ENCODE measurements at regions of chr5 and their contacts with region 1.

Region 1: DNA sequence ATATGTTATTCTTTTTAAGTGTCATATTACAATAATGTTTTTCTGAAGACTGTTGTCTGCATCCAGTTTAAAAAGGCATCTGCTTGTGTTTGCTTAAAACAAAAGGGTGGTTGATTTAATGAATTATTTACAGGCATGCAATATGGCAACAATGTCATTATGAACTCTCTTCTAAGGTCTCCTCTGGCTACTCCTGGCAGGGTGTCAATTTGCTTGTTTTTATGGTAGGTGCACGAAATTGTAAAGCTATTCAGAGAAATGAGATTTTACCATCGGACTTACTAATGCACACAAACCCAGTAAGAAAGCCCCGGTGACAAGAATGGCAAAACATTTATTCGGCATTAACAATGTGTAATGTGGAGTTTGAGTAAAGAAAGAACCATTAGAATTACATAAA is 539.8 kb upstream of the ZNF608 start:
- DNase-seq: no peak
- ATAC-seq: no peak
- H3K4me3 ChIP-seq: no peak overlapping the region
- H3K27ac ChIP-seq: no peak overlapping the region
- H3K4me1 ChIP-seq: no peaks in the 10 kb centered on the region
- H3K27me3 ChIP-seq: no peaks in the 10 kb centered on the region

Region 2: DNA sequence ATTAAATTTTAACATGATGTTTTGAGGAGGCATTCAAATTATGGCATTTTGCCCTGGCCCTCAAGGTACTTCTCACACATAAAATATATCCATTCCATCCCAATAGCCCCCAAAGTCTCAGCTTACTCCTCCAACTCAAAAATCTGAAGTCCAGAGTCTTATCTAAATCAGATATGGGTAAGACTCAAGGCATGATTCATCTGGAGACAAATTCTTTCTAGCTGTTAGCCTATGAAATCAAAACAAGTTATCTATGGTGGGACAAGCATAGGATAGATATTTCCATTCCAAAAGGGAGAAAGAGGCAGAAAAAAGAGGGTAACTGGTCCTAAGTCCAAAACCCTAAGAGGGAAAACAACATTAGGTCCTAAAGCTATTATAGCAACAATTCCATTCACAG is 948.3 kb before region 1 on chr5:
- intact Hi-C with region 1: loop called in 1 of 2 experiments (anchors 5 kb)
- DNase-seq: no peak
- ATAC-seq: no peak
- H3K4me3 ChIP-seq: no peak overlapping the region
- H3K27ac ChIP-seq: no peak overlapping the region
- H3K4me1 ChIP-seq: peaks cover 2 to 4% of the 10 kb centered on the region in 2 donors
- H3K27me3 ChIP-seq: no peaks in the 10 kb centered on the region

Region 3: GRCh38 chr5:124980163-124980941 is 305.9 kb before region 1 on chr5:
- intact Hi-C with region 1: no loop called
- DNase-seq: no peak
- ATAC-seq: no peak
- H3K4me3 ChIP-seq: no peak overlapping the region
- H3K27ac ChIP-seq: no peak overlapping the region
- H3K4me1 ChIP-seq: no peaks in the 10 kb centered on the region
- H3K27me3 ChIP-seq: no peaks in the 10 kb centered on the region